ENCODE measurements at regions of chr16 and their contacts with region 1.

Region 1: DNA sequence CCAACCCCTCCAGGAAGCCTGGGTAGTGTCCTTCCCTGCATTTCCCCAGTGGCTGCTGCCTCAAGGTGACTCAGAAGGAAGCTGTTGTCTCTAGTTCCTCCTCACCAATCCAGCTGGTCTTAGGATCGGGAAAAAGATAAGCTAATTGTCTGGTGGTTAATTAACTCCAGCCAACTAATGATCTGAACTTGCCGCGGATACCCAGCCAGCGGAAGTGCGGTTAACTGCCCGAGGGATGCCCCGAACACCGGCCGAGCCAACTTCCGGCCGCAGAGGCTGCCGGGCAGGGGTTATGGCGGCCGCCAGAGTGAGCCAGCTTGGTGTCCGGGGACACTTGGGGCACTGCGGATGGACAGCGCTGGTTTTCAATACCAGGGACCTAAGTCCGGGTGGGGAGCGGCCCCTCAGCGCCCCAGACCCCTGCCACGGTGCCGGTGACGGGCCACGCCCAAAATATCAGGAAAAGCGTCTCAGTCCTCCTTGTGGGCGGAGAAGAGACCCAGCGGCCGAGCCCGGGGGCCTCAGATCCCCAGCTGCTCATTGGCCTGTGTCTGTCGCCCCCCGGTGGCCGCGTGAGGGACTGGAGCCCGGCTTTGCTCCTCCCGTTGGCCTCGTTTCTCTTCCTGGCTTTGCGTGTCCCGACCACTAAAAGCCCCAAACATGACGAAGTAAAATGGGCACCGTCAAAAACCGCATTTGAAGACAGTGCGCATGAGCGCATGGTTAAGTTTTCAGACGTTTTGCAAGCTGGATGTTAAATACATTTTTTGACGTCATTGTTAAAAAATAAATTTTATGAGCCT is 10.2 kb upstream of the PRSS22 start:
- DNase-seq: peak; percentile 92
- H3K4me3 Mint-ChIP-seq: peak overlapping the region; percentile 89
- H3K27ac Mint-ChIP-seq: peak overlapping the region; percentile 84
- H3K4me1 Mint-ChIP-seq: peaks cover 4% of the 10 kb centered on the region
- H3K27me3 Mint-ChIP-seq: peaks cover 6% of the 10 kb centered on the region

Region 2: GRCh38 chr16:2682209-2683021 is 185.8 kb before region 1 on chr16 and contains the start of gene KCTD5:
- intact Hi-C with region 1: loop called (anchors 2 kb)
- DNase-seq: peak; percentile 96
- H3K4me3 Mint-ChIP-seq: peak within 1 kb of the TSS; percentile 99
- H3K27ac Mint-ChIP-seq: peak within 1 kb of the TSS; percentile 97
- H3K4me1 Mint-ChIP-seq: peaks cover 13% of the 10 kb centered on the region
- H3K27me3 Mint-ChIP-seq: peaks cover 2% of the 10 kb centered on the region
- total RNA-seq, gene KCTD5: 63.9 and 69.6 TPM in 2 replicates

Region 3: GRCh38 chr16:2720719-2721633 is 147.2 kb before region 1 on chr16:
- intact Hi-C with region 1: loop called (anchors 10 kb)
- DNase-seq: peak; percentile 89
- H3K4me3 Mint-ChIP-seq: peak overlapping the region; percentile 79
- H3K27ac Mint-ChIP-seq: peak overlapping the region; percentile 78
- H3K4me1 Mint-ChIP-seq: no peaks in the 10 kb centered on the region
- H3K27me3 Mint-ChIP-seq: peaks cover 3% of the 10 kb centered on the region

Region 4: DNA sequence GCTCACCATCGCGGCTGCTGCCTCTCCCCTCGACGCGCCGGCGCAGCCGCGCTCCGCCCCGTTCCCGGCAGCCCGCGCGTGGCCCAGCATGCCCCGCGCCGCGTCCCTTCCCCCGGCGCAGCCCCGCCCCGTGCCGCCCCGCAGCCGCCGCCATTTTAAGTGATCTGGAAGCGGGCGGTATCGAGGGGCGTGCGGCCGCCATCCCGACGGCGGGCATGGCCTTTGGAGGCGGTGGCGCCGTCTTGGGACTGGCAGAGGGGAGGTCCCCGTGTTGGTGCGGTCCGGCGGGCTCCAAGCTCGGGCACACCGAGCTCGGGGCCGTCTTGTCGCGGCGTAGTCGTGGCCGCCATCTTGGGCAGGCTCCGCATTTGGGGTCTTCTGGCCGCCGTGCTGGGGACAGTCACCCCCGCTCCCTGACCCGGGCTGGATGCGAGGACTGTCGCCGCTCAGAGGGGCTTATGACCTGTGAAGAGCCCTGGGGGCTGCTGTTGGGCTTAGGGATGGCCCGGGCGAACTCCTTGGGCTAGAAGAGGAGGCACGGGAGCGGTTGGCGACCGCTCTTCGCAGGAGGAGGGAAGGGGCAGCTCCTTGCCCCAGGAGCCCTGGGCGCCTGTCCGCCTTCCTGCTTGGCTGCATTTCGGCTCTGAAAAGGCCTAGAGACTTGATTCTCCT is 90.8 kb before region 1 on chr16 and contains the start of gene ELOB:
- intact Hi-C with region 1: loop called (anchors 1 kb)
- DNase-seq: peak; percentile 87
- H3K4me3 Mint-ChIP-seq: peak within 1 kb of the TSS; percentile 93
- H3K27ac Mint-ChIP-seq: peak within 1 kb of the TSS; percentile 94
- H3K4me1 Mint-ChIP-seq: peaks cover 27% of the 10 kb centered on the region
- H3K27me3 Mint-ChIP-seq: no peaks in the 10 kb centered on the region
- total RNA-seq, gene ELOB: 256 and 277 TPM in 2 replicates

Region 5: GRCh38 chr16:2838928-2839327 is 29.3 kb before region 1 on chr16:
- intact Hi-C with region 1: loop called (anchors 1 kb)
- DNase-seq: peak; percentile 19
- H3K4me3 Mint-ChIP-seq: no peak overlapping the region
- H3K27ac Mint-ChIP-seq: peak overlapping the region; percentile 64
- H3K4me1 Mint-ChIP-seq: peaks cover 12% of the 10 kb centered on the region
- H3K27me3 Mint-ChIP-seq: peaks cover 3% of the 10 kb centered on the region

Region 6: GRCh38 chr16:2854700-2855309 is 13.4 kb before region 1 on chr16:
- intact Hi-C with region 1: no loop called
- DNase-seq: no peak
- H3K4me3 Mint-ChIP-seq: no peak overlapping the region
- H3K27ac Mint-ChIP-seq: no peak overlapping the region
- H3K4me1 Mint-ChIP-seq: no peaks in the 10 kb centered on the region
- H3K27me3 Mint-ChIP-seq: peaks cover 6% of the 10 kb centered on the region

Region 7: DNA sequence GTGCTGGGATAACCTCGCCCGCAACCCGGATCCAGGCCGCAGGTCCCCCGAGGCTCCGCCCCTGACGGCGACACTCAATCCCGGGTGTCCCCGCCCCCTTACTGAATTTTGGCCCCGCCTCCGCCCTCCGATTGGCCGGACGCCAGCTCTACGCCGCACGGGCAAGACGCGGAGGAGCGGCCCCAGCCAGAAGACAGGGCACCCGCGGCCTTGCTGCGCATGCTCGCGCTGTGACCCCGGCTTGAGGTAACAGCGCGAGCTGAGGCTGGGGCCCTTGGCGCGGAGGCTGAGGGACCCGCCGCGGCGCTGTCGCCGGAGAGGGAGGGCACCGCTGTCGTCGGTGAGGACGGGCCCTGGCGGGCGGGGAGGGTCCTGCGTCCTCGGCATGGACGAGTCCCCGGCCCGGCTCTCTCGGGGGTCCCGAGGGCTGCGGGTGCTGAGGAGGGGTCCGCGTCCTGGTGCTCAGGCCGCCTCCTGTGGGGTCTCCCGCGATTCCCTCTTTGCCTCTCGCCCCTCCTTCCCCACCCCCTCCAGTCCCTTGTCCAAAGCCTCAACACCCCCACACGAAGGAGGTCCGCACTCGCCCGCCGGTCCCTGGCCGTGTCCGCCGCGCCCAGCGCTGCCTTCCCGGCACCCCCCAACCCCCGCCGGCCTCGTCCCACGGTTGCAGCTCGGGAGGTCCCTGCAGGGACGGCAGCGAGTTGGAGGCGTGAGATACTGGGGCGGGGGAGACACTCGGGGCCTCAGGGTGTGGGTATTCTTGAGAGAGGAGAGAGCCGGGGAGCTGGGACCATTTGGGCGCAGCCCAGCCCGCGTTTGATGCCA is 15.1 kb after region 1 on chr16 and contains the start of gene FLYWCH2:
- intact Hi-C with region 1: loop called (anchors 1 kb)
- DNase-seq: peak; percentile 100
- H3K4me3 Mint-ChIP-seq: peak within 1 kb of the TSS; percentile 88
- H3K27ac Mint-ChIP-seq: peak within 1 kb of the TSS; percentile 95
- H3K4me1 Mint-ChIP-seq: peaks cover 16% of the 10 kb centered on the region
- H3K27me3 Mint-ChIP-seq: no peaks in the 10 kb centered on the region
- total RNA-seq, gene FLYWCH2: 22.9 and 25.4 TPM in 2 replicates

Measured in activated T-helper 1 cell treated with anti-CD3 and anti-CD28 coated beads, Interleukin-12 subunit alpha, Interleukin-12 subunit beta, Interleukin-2, Interleukin-4 antibody, amounts not matched to agents 30 ng/mL and 10 ng/mL and 1 ng/mL, durations not matched to agents 14 hours and 24 hours and 36 hours (primary cell).